ENCODE measurements at regions of chr2 and their contacts with region 1.

Region 1: GRCh38 chr2:71226965-71227560 is at the start of gene PAIP2B:
- DNase-seq: peak; percentile 98 to 100 (median 100)

Region 2: GRCh38 chr2:71276311-71277146 is 49.5 kb after region 1 on chr2:
- intact Hi-C with region 1: loop called (anchors 2 kb)
- DNase-seq: peak; percentile 84 to 98 (median 95)

Region 3: GRCh38 chr2:71331581-71332434 is 104.7 kb after region 1 on chr2 and contains the start of gene ZNF638:
- intact Hi-C with region 1: loop called (anchors 5 kb)
- DNase-seq: peak; percentile 71 to 97 (median 92)

Region 4: DNA sequence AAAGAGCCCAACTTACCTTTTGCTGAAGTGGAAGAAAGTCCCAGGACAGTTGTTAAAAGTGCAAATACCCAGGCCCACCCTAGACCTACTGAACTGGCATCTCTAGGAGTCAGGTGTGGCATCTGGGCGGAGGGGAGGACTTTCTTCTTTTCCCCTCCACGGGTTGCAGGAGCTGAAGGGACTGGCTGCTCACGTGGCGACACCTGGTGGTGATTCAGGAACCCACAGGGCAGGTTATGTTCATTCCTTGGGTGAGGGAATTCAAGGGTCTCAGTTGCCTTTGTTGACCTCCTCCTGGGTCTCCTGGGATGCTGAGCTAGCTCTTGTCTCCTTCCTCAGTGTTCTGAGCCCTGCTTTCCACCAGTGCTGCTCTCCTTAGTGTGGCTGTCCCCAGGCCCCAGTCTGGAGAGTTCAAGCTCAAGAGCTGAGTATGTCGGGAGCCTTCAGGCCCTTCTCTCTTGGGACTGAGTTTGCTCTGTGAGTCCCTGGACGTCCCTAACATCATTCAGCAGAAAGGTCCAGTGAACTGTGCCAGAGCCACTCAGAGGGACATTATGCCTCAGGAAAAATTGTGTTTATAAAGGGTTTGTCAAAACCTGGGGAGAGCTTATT is 283.2 kb after region 1 on chr2:
- intact Hi-C with region 1: loop called (anchors 2 kb)
- DNase-seq: peak; percentile 58 to 92 (median 80)